ENCODE measurements at regions of chr19 and their contacts with region 1.

Region 1: GRCh38 chr19:48363810-48364563 is at the starts of genes SYNGR4 and TMEM143:
- DNase-seq: peak; percentile 92 to 100 (median 98)
- ATAC-seq: peak; percentile 87
- H3K4me3 Mint-ChIP-seq: peak within 1 kb of the TSS; percentile 79 to 95 (median 89)
- H3K27ac Mint-ChIP-seq: peak within 1 kb of the TSS; percentile 93 to 99 (median 96)
- H3K4me1 Mint-ChIP-seq: peaks cover 10 to 26% (median 16%) of the 10 kb centered on the region in 4 donors
- H3K27me3 Mint-ChIP-seq: no peaks in the 10 kb centered on the region
- polyA plus RNA-seq, gene SYNGR4: not detected
- polyA plus RNA-seq, gene TMEM143: 3.9 to 10.7 (median 4.9) TPM

Region 2: GRCh38 chr19:48321622-48322591 is 42.1 kb before region 1 on chr19:
- POLR2A ChIA-PET with region 1: interaction called, 36 read pairs
- DNase-seq: peak; percentile 98 to 100 (median 100)
- ATAC-seq: peak; percentile 67 to 77
- H3K4me3 Mint-ChIP-seq: peak overlapping the region; percentile 92 to 100 (median 96)
- H3K27ac Mint-ChIP-seq: peak overlapping the region; percentile 98 to 100 (median 100)
- H3K4me1 Mint-ChIP-seq: peaks cover 32 to 67% (median 62%) of the 10 kb centered on the region in 4 donors
- H3K27me3 Mint-ChIP-seq: no peaks in the 10 kb centered on the region

Region 3: GRCh38 chr19:48333467-48334384 is 30.3 kb before region 1 on chr19:
- POLR2A ChIA-PET with region 1: interaction called, 39 read pairs
- DNase-seq: peak; percentile 88 to 96 (median 92)
- ATAC-seq: peak; percentile 62
- H3K4me3 Mint-ChIP-seq: peak overlapping the region; percentile 92 to 100 (median 96)
- H3K27ac Mint-ChIP-seq: peak overlapping the region; percentile 95 to 100 (median 98)
- H3K4me1 Mint-ChIP-seq: peaks cover 27 to 64% (median 52%) of the 10 kb centered on the region in 4 donors
- H3K27me3 Mint-ChIP-seq: no peaks in the 10 kb centered on the region

Region 4: DNA sequence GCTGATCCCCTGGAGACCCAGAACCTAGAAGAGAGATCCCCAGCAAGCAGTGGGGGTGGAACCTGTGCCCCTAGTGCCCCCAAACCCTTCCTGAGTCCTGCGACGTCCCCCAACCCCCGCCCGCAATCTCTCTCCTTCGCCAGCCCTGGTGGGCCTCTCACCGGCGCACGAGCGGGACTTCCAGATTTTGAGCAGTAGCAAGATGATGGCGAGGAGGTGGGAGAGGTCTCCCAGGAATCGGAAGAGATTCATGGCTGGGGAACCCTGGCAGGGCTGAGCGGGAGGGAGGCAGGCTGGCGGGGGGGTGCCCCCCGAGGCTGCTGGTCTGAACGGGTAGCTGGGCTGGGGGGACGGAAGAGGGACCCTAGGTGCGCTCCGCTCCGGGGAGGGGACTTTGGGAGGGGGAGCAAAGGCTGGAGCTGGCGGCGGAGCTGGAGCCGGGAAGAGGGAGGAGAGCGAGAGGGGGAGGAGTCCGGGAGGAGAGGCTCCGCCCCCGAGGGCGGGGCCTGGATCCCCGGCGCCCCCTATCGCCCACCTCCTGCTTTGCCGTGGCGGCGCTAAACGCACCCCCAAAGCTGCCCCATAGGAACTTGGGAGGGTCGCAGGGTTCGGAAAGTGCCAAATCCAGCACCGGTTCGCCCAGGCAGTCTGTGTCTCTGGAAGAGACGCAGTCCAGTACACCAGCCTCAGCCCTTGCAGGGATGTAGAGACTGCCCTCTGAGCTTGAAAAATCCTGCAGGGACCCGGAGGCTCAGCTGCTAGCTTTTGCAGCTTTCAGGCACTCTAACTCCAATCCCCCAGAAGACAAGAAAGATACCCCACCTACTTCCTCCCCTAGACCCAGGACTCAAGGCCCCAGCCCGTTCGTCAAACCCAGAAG is 27.4 kb after region 1 on chr19 and contains the start of gene KDELR1:
- POLR2A ChIA-PET with region 1: interaction called, 29 read pairs
- DNase-seq: peak; percentile 51 to 88 (median 74)
- ATAC-seq: peak; percentile 75 to 78
- H3K4me3 Mint-ChIP-seq: peak within 1 kb of the TSS; percentile 91 to 95 (median 92)
- H3K27ac Mint-ChIP-seq: peak within 1 kb of the TSS; percentile 69 to 97 (median 94)
- H3K4me1 Mint-ChIP-seq: peaks cover 24 to 59% (median 34%) of the 10 kb centered on the region in 4 donors
- H3K27me3 Mint-ChIP-seq: peaks cover 9 to 28% (median 16%) of the 10 kb centered on the region in 5 donors
- polyA plus RNA-seq, gene KDELR1: 21.3 to 24.8 (median 22.5) TPM

Region 5: DNA sequence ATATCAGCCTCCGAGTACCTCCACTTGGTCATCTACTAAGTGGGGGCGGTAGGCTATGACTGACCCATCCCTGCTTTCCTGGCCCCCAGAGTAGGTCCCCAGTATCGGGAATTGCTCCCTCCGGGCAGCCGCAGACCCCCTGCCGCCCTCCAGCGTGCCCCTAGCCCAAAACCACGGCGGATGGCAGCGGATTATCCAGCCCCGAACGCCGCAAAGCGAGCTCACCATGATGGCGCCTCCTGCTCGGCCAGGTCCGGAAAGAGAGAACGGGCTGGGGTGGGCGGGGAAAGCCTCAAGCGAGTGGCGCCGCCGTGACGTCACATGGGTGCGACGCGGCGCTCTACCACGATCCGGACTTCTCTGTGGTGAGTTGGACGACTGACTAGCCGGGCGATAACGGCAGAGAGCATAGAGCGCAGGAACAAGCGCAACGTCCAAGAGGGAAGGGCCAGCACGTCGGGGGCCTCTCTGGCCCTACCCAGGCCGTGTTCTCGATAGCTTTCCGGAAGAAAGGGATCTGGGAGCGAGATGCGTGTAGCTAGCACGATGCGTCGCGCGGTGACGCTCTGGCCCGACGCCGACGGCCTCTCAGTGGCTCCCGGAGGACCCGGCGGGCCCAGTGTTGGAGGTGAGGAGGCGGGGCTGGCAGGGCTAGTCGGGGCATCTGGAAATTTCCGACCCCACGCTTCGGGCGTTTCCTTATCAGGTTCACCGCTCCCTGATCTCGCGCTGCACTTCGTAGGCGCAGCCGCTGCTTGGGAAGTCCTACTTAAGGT is 255.1 kb after region 1 on chr19 and contains the starts of genes RPL18 and SPHK2:
- POLR2A ChIA-PET with region 1: interaction called, 13 read pairs
- DNase-seq: peak; percentile 88 to 97 (median 93)
- ATAC-seq: peak; percentile 77 to 78
- H3K4me3 Mint-ChIP-seq: peak within 1 kb of the TSS; percentile 94 to 99 (median 96)
- H3K27ac Mint-ChIP-seq: peak within 1 kb of the TSS; percentile 94 to 99 (median 98)
- H3K4me1 Mint-ChIP-seq: peaks cover 28 to 66% (median 47%) of the 10 kb centered on the region in 4 donors
- H3K27me3 Mint-ChIP-seq: no peaks in the 10 kb centered on the region
- polyA plus RNA-seq, gene RPL18: 2,610 to 3,008 (median 2,848) TPM
- polyA plus RNA-seq, gene SPHK2: 7.5 to 9.1 (median 8.3) TPM

Measured in naive thymus-derived CD8-positive, alpha-beta T cell (primary cell).